Activated B cell treated with CpG ODN at 0.5 μM for 24 hours (primary cell): ENCODE measurements at regions of chr10 and their contacts with region 1.

Region 1: DNA sequence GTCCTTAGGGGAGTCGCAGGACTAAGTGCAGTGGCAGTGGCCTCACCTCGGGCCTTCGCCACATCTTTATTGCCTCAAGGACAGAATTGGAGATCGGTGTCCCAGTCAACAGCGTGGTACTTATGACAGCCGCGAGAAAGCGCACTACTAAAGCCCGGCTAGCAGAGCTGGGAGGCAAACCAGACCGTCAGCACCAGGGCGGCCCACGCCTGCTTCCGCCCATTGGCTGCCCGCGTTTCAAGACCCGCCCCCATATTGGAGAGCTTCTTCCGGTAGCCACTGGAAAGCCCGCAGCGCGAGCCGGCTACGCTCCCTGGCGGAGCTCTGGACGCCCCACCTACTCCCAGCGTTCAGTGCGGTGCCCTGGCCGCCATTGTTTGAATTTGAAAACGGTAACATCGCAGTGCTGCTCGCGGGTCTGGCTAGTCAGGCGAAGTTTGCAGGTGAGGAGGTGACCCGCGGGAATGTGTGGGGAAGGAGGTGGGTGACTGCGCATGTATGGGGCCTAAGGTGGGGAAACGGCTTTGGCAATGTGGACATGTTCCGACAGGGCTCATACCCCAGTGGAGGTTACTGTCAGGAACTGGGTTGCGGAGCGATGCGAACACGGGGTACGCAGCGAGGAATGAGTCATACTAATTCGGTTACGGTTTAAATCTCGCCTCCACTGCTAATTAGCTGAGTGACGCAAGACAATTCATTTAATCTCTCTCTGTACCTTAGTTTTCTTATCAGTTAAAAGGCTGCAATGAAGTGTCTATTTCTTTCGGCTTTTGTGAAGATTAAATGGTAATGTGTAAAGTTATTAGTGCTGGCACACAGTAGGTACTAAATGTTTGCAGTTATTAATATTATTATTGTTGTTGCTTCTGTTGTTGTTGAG is at the start of gene KIF20B:
- DNase-seq: peak; percentile 91
- ATAC-seq: peak; percentile 97
- H3K4me3 Mint-ChIP-seq: peak within 1 kb of the TSS; percentile 96
- H3K27ac Mint-ChIP-seq: peak within 1 kb of the TSS; percentile 98
- H3K4me1 Mint-ChIP-seq: peaks cover 39% of the 10 kb centered on the region
- H3K27me3 Mint-ChIP-seq: no peaks in the 10 kb centered on the region
- CTCF ChIP-seq: no peak
- total RNA-seq, gene KIF20B: 23.8 and 24.0 TPM in 2 replicates

Region 2: DNA sequence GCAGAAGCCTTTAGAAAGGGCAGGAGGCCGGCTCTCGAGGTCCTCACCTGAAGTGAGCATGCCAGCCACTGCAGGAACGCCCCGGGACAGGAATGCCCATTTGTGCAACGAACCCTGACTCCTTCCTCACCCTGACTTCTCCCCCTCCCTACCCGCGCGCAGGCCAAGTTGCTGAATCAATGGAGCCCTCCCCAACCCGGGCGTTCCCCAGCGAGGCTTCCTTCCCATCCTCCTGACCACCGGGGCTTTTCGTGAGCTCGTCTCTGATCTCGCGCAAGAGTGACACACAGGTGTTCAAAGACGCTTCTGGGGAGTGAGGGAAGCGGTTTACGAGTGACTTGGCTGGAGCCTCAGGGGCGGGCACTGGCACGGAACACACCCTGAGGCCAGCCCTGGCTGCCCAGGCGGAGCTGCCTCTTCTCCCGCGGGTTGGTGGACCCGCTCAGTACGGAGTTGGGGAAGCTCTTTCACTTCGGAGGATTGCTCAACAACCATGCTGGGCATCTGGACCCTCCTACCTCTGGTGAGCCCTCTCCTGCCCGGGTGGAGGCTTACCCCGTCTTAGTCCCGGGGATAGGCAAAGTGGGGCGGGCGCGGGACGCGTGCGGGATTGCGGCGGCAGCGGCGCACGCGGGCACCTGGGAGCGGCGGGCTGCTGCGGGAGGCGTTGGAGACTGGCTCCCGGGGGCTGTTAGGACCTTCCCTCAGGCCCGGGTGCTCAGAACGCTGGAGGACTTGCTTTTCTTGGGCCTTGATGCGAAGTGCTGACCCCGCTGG is 710.9 kb before region 1 on chr10 and contains the start of gene FAS:
- CTCF ChIA-PET with region 1: no interaction called
- POLR2A ChIA-PET with region 1: no interaction called
- intact Hi-C with region 1: loop called (anchors 10 kb)
- DNase-seq: peak; percentile 56
- ATAC-seq: peak; percentile 75
- H3K4me3 Mint-ChIP-seq: peak within 1 kb of the TSS; percentile 95
- H3K27ac Mint-ChIP-seq: peak within 1 kb of the TSS; percentile 88
- H3K4me1 Mint-ChIP-seq: peaks cover 53% of the 10 kb centered on the region
- H3K27me3 Mint-ChIP-seq: no peaks in the 10 kb centered on the region
- CTCF ChIP-seq: no peak
- total RNA-seq, gene FAS: 18.2 and 22.6 TPM in 2 replicates

Region 3: GRCh38 chr10:89241486-89242344 is 459.8 kb before region 1 on chr10:
- CTCF ChIA-PET with region 1: no interaction called
- POLR2A ChIA-PET with region 1: no interaction called
- intact Hi-C with region 1: no loop called
- DNase-seq: no peak
- ATAC-seq: no peak
- H3K4me3 Mint-ChIP-seq: no peak overlapping the region
- H3K27ac Mint-ChIP-seq: no peak overlapping the region
- H3K4me1 Mint-ChIP-seq: peaks cover 43% of the 10 kb centered on the region
- H3K27me3 Mint-ChIP-seq: no peaks in the 10 kb centered on the region
- CTCF ChIP-seq: no peak

Region 4: DNA sequence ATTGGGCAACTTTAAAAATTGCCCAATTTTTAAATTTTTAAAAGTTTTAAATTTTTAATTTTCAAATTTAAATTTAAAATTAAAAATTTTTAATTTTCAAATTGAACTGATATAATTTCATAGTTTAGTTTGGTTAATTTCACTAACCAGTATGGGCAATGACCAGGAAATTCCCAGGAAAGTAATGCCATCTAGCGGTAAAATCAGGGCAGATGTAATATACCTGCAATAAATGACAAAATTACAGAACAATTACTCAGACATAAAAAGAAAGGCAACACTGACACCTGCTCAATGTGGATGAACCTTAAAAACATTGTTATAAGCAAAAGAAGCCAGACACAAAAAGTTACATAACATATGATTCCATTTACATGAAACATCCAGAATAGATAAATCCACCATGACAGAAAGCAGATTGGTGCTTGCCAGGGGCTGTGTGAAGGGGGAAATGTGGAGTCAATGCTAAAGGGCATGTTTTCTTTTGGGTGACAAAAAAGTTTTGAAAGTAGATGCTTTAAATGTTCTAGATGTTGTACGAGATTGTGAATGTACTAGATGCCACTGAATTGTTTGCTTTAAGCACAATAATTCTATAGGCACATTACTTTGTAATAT is 137.5 kb before region 1 on chr10:
- CTCF ChIA-PET with region 1: interaction called, 3 read pairs
- POLR2A ChIA-PET with region 1: no interaction called
- intact Hi-C with region 1: loop called (anchors 1 kb)
- DNase-seq: no peak
- ATAC-seq: peak; percentile 57
- H3K4me3 Mint-ChIP-seq: no peak overlapping the region
- H3K27ac Mint-ChIP-seq: no peak overlapping the region
- H3K4me1 Mint-ChIP-seq: no peaks in the 10 kb centered on the region
- H3K27me3 Mint-ChIP-seq: peaks cover 14% of the 10 kb centered on the region
- CTCF ChIP-seq: no peak

Region 5: GRCh38 chr10:89668386-89669071 is 33.0 kb before region 1 on chr10:
- CTCF ChIA-PET with region 1: no interaction called
- POLR2A ChIA-PET with region 1: interaction called, 6 read pairs
- intact Hi-C with region 1: loop called (anchors 1 kb)
- DNase-seq: no peak
- ATAC-seq: no peak
- H3K4me3 Mint-ChIP-seq: no peak overlapping the region
- H3K27ac Mint-ChIP-seq: no peak overlapping the region
- H3K4me1 Mint-ChIP-seq: peaks cover 7% of the 10 kb centered on the region
- H3K27me3 Mint-ChIP-seq: no peaks in the 10 kb centered on the region
- CTCF ChIP-seq: no peak

Region 6: GRCh38 chr10:89771684-89772083 is 70.2 kb after region 1 on chr10:
- CTCF ChIA-PET with region 1: no interaction called
- POLR2A ChIA-PET with region 1: no interaction called
- intact Hi-C with region 1: no loop called
- DNase-seq: no peak
- ATAC-seq: no peak
- H3K4me3 Mint-ChIP-seq: no peak overlapping the region
- H3K27ac Mint-ChIP-seq: no peak overlapping the region
- H3K4me1 Mint-ChIP-seq: peaks cover 3% of the 10 kb centered on the region
- H3K27me3 Mint-ChIP-seq: no peaks in the 10 kb centered on the region
- CTCF ChIP-seq: no peak

Region 7: DNA sequence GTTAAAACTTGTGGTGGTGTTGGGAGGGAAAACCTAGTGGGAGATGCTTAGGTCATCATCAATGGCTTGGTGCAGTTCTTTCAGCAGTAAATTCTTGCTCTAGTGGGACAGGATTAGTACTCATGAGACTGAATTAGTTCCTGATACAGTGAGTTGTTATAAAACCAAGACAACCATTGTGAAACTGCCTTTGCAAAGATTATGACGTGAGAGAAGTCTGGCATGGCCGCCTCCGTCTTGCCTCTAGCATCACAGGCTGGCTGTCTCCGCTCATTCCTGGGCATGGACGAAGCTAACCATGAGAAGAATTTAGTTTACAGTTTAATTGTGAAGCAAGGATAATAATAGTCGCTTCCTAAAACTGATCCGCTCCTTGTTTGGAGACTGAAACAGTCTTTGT is 186.4 kb after region 1 on chr10:
- CTCF ChIA-PET with region 1: no interaction called
- POLR2A ChIA-PET with region 1: interaction called, 4 read pairs
- intact Hi-C with region 1: loop called (anchors 1 kb)
- DNase-seq: peak; percentile 32
- ATAC-seq: peak; percentile 75
- H3K4me3 Mint-ChIP-seq: peak overlapping the region; percentile 81
- H3K27ac Mint-ChIP-seq: peak overlapping the region; percentile 98
- H3K4me1 Mint-ChIP-seq: peaks cover 54% of the 10 kb centered on the region
- H3K27me3 Mint-ChIP-seq: peaks cover 3% of the 10 kb centered on the region
- CTCF ChIP-seq: no peak